Left cardiac atrium (tissue), 4 donors: ENCODE measurements at regions of chr9 and their contacts with region 1.

Region 1: DNA sequence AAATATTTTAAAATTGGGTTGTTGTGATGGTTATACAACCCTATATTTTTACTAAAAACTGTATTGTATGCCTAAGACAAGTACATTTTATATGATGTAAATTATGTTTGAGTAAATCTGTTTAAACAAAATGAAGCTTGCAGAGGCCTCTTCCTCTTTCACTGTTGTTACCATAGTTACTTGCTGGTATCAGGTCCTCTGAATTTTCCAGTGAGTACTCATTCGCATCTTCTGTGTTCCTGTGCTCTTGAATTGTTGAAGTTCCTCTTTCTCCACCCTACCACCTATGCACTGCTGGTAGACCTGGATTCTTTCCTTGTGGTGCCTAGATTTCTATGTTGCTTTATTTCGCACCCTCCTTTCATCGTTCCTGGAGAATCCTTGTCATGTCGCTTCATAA is 938.5 kb upstream of the ACO1 start:
- DNase-seq: no peak
- ATAC-seq: no peak

Region 2: DNA sequence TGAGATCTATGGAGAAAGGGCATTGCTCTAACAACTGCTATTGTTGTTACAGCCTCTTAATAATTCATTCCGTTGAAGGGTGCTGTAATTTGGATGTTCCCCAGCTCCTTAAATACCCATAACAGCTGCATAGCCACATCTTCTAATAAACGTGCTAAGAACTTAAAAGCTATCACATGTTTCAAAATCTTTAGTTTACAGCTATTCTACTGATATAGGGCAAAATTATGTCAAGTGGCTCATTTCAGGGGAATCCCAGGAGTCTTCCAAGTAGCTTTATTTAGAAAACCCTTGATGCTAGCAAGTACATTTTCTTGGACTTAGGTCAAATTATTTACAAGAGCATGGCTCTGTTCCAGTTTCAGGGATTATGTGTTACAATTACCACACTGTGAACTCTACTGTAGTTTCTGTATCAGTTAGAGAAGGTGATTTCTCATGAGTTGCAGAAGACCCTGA is 51.9 kb before region 1 on chr9:
- intact Hi-C with region 1: loop called in 1 of 2 experiments (anchors 10 kb)
- DNase-seq: no peak
- ATAC-seq: peak in 1 of 2 donors; percentile 23